GM12878 (cell line): ENCODE measurements at regions of chr15 and their contacts with region 1.

Region 1: DNA sequence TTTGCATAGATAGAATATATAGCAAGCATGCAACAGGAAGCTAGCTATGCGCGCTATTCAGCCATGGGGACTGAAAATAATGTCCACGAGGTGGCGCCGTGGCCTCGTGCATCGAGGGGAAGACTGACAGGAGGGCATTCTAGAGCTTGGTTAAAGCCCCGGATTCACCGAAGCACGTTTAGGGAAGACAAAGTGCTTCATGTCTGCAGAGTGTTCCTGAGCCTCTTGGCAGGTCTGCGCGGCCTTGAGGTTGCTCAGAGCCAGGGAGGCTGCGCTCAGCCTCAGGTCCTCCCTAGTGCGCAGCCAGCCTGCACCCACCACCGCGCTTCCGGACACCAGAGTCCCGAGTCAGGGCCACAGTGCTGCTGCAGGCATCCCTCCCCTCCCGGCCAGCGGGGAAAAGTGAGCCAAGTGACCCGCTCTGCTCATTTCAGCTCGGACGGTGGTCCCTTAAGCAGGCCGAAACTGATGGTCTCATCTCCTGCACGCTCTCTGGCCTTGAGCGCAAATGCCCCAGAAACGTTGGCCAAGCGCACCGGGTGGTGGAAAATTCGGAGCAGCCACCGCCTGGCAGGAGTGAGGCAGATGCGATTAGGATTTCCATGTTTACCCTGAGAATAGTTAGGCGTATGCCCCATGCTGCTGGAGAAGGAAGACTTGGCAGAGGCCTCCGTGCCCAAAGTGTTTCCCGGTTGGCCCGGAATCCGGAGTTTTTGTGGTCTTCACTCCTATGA is 24.8 kb downstream of the GABRA5 start:
- DNase-seq: no peak
- ATAC-seq: peak; percentile 61
- H3K4me3 ChIP-seq: no peak overlapping the region
- H3K27ac ChIP-seq: no peak overlapping the region
- H3K4me1 ChIP-seq: no peaks in the 10 kb centered on the region
- H3K27me3 ChIP-seq: no peaks in the 10 kb centered on the region
- CTCF ChIP-seq: peak; percentile 35 to 59 (median 37); a peak in 5 of 6 replicates
- EP300 ChIP-seq: no peak
- POLR2A ChIP-seq: no peak
- RAD21 ChIP-seq: peak; percentile 53

Region 2: DNA sequence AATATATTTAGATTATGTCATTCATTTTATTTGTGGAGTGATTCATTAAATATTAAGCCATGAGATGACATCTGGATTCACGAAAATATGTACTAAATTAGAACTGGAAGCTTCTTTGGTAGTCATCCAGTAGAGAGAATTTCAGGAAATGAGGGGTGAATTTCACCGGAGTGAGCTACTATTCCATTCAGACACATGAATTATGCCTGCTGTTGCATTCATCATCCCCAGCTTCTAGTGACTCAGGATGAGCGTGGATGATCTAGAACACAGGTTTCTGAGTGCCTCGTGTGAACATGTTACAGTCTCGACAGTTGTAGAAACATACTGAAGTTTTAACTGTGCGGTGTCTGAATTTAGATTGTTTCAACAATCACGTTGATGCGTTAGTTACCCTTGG is 36.4 kb after region 1 on chr15:
- CTCF ChIA-PET with region 1: no interaction called
- POLR2A ChIA-PET with region 1: no interaction called
- RAD21 ChIA-PET with region 1: no interaction called
- SMC1A ChIA-PET with region 1: no interaction called
- in situ Hi-C with region 1: no loop called
- intact Hi-C with region 1: no loop called
- DNase-seq: no peak
- ATAC-seq: no peak
- H3K4me3 ChIP-seq: no peak overlapping the region
- H3K27ac ChIP-seq: no peak overlapping the region
- H3K4me1 ChIP-seq: no peaks in the 10 kb centered on the region
- H3K27me3 ChIP-seq: no peaks in the 10 kb centered on the region
- CTCF ChIP-seq: no peak
- EP300 ChIP-seq: no peak
- POLR2A ChIP-seq: no peak
- RAD21 ChIP-seq: no peak

Region 3: GRCh38 chr15:27017168-27017809 is 125.7 kb after region 1 on chr15:
- CTCF ChIA-PET with region 1: interaction called, 4 read pairs
- POLR2A ChIA-PET with region 1: no interaction called
- RAD21 ChIA-PET with region 1: no interaction called
- SMC1A ChIA-PET with region 1: no interaction called
- in situ Hi-C with region 1: no loop called
- intact Hi-C with region 1: loop called (anchors 5 kb)
- DNase-seq: peak; percentile 0
- ATAC-seq: 0 out of 3 replicates have a peak, but pooled peaks have one; percentile 21
- H3K4me3 ChIP-seq: no peak overlapping the region
- H3K27ac ChIP-seq: no peak overlapping the region
- H3K4me1 ChIP-seq: no peaks in the 10 kb centered on the region
- H3K27me3 ChIP-seq: no peaks in the 10 kb centered on the region
- CTCF ChIP-seq: peak; percentile 39 to 50 (median 40); a peak in 5 of 6 replicates
- EP300 ChIP-seq: no peak
- POLR2A ChIP-seq: no peak
- RAD21 ChIP-seq: peak; percentile 27; the same call in 1 of the 2 replicates

Region 4: DNA sequence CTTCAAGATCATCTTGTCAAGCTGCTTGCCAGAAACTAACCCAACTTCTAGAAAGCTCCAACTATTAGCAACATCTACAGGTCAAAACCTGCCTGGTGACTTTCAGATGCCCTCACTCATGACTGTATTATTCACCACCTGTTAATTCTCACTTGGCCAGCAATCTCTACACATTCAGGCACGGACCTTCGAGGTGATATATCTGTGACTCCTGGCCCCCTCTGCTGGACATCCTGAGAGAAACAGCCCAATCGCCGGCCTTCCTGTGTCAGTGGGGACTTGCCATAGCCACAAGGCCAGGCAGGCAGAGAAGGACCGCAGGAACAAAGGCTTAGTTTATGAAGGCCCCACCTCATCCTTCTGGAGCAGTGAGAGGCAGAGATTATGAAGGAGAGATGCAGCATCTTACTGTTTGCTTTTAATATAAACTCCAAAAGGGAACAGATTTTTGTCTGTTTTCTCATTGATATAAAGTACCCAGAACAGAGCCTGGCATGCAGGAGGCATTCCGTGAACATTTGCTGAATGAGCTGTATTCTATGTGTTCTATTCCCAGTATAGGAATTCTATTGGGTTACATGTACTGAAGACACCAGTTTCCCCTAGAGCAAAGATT is 1231.9 kb after region 1 on chr15:
- CTCF ChIA-PET with region 1: interaction called, 6 read pairs
- POLR2A ChIA-PET with region 1: no interaction called
- RAD21 ChIA-PET with region 1: interaction called, 5 read pairs
- SMC1A ChIA-PET with region 1: no interaction called
- in situ Hi-C with region 1: loop called (anchors 5 kb)
- intact Hi-C with region 1: no loop called
- DNase-seq: no peak
- ATAC-seq: peak; percentile 91
- H3K4me3 ChIP-seq: no peak overlapping the region
- H3K27ac ChIP-seq: no peak overlapping the region
- H3K4me1 ChIP-seq: no peaks in the 10 kb centered on the region
- H3K27me3 ChIP-seq: no peaks in the 10 kb centered on the region
- CTCF ChIP-seq: peak; percentile 55 to 59 (median 56); a peak in 5 of 6 replicates
- EP300 ChIP-seq: no peak
- POLR2A ChIP-seq: no peak
- RAD21 ChIP-seq: peak; percentile 41